WTC11 (cell line): ENCODE measurements at regions of chr4 and their contacts with region 1.

Region 1: GRCh38 chr4:126604268-126604867 is 1028.4 kb upstream of the INTU start:
- DNase-seq: peak; percentile 20
- ATAC-seq: peak; percentile 74
- H3K4me3 Mint-ChIP-seq: no peak overlapping the region
- H3K27ac Mint-ChIP-seq: no peak overlapping the region
- H3K4me1 Mint-ChIP-seq: peaks cover 10% of the 10 kb centered on the region
- H3K27me3 Mint-ChIP-seq: no peaks in the 10 kb centered on the region
- CTCF ChIP-seq: peak; percentile 38; the same call in 1 of the 2 replicates

Region 2: DNA sequence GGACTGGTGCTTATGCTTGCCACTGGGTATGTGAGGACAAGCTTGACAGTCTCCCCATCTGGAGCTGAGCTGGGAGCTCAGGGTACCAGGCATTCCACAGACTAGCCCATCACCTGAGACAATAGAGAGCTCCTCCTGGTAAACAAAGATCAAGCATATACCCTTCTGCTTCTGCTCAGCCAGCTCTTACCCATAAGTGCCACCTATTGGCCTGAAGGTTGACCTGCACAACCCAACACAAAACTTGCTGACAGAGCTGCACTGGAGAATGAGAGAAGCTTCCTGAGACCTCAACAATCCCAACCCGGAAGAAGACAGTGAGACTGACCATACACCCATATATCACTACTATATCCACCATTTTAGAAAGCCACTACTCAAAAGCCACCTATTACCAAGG is 20.9 kb before region 1 on chr4:
- CTCF ChIA-PET with region 1: interaction called, 23 read pairs
- POLR2A ChIA-PET with region 1: no interaction called
- DNase-seq: peak; percentile 45
- ATAC-seq: peak; percentile 98
- H3K4me3 Mint-ChIP-seq: no peak overlapping the region
- H3K27ac Mint-ChIP-seq: no peak overlapping the region
- H3K4me1 Mint-ChIP-seq: peaks cover 5% of the 10 kb centered on the region
- H3K27me3 Mint-ChIP-seq: no peaks in the 10 kb centered on the region
- CTCF ChIP-seq: no peak; the same call in 1 of the 2 replicates

Region 3: DNA sequence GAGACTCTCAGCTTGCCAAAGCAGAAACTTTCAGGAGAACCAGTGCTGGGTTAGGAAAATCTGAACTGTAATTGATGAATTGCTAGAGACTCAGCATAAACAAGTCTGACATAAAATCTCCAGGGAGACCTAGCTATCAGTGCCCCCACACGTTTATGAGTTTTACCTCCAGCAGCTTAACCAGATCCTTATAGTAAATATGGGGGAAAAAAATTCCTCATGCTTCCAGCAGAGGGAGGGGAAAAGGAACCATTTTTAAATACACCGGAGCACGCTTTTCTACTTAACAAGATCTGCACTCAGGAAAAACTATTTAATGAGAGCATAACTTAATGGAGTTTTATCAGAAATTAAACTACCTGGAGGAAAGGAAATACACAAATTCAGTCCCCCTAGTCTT is 12.3 kb before region 1 on chr4:
- CTCF ChIA-PET with region 1: interaction called, 11 read pairs
- POLR2A ChIA-PET with region 1: no interaction called
- DNase-seq: no peak
- ATAC-seq: peak; percentile 38
- H3K4me3 Mint-ChIP-seq: no peak overlapping the region
- H3K27ac Mint-ChIP-seq: no peak overlapping the region
- H3K4me1 Mint-ChIP-seq: no peaks in the 10 kb centered on the region
- H3K27me3 Mint-ChIP-seq: no peaks in the 10 kb centered on the region
- CTCF ChIP-seq: no peak

Region 4: DNA sequence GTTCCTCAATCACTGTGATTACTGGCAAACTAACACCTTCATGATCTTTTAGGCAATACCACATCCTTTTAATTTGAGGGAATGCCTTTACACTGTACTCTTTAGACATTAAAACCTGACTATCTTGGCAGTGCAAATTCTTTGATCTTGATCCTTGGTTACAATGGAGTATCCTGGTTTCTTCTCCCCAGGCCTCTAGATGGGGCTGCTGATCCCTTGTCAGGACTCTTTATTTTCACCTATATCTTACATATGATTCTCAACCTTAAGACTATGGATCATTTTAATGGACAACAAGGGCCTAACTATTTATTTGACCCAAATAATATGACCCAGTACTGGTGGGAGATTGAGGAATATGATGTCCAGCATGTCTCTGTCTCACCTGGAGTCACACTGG is 22.9 kb after region 1 on chr4:
- CTCF ChIA-PET with region 1: no interaction called
- POLR2A ChIA-PET with region 1: no interaction called
- DNase-seq: peak; percentile 29
- ATAC-seq: peak; percentile 96
- H3K4me3 Mint-ChIP-seq: no peak overlapping the region
- H3K27ac Mint-ChIP-seq: no peak overlapping the region
- H3K4me1 Mint-ChIP-seq: no peaks in the 10 kb centered on the region
- H3K27me3 Mint-ChIP-seq: no peaks in the 10 kb centered on the region
- CTCF ChIP-seq: no peak

Region 5: DNA sequence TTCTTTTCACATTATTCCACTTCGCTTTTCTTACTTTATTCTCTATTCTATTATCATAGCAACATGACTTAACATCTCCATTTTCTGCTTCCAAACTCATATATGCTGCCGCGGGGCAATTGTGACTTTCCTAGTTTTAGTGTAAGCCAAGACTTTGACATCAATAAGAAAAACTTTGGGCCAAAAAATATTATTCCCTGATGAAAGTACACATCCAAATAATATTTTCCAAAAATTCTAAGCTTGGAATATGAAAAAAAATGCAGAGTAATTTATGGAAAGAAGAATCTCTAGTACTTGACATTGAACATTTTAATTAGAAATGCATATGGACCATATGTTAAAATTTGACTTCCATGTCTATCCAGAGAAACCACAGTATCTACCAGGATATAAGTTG is 33.3 kb after region 1 on chr4:
- CTCF ChIA-PET with region 1: no interaction called
- POLR2A ChIA-PET with region 1: no interaction called
- DNase-seq: no peak
- ATAC-seq: no peak
- H3K4me3 Mint-ChIP-seq: no peak overlapping the region
- H3K27ac Mint-ChIP-seq: no peak overlapping the region
- H3K4me1 Mint-ChIP-seq: peaks cover 4% of the 10 kb centered on the region; the same call in 1 of the 2 replicates
- H3K27me3 Mint-ChIP-seq: no peaks in the 10 kb centered on the region
- CTCF ChIP-seq: no peak